ENCODE measurements at regions of chr11 and their contacts with region 1.

Region 1: DNA sequence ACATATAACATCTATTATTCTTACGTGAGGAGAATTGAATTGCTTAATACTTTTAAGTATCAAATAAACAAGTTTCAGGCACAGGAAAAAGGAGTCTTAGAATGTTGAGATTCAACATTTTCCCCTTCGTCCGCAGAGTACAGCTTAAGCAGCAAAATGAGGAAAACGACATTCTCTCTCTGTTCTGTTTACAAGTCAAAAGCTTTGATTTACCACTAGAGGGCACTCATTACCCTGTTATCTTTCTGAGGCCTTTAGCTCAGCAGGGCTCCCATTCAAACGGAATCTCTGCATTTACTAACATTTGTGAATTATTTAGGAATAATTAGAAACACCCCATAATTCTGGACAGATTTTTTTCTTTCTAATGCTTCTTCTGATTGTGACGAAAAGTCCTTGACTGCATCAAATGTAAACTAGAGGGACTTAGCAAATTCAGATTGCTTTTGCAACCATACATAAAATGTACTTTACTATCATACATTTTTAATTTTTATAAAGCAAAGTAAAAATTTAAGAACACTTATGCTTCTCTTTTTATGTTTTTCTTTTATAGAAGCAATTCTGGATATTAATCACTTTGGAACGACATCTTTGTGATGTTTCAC is 75.0 kb downstream of the JRKL start:
- DNase-seq: peak; percentile 11
- ATAC-seq: peak; percentile 96
- H3K4me3 ChIP-seq: no peak overlapping the region
- H3K27ac ChIP-seq: no peak overlapping the region
- H3K4me1 ChIP-seq: no peaks in the 10 kb centered on the region
- H3K27me3 ChIP-seq: peaks cover 0 to 3% of the 10 kb centered on the region in 2 experiments; a peak in 1 of 4 replicates
- CTCF ChIP-seq: peak; percentile 63 to 70 (median 64)
- EP300 ChIP-seq: no peak
- POLR2A ChIP-seq: no peak
- RAD21 ChIP-seq: peak; percentile 81

Region 2: DNA sequence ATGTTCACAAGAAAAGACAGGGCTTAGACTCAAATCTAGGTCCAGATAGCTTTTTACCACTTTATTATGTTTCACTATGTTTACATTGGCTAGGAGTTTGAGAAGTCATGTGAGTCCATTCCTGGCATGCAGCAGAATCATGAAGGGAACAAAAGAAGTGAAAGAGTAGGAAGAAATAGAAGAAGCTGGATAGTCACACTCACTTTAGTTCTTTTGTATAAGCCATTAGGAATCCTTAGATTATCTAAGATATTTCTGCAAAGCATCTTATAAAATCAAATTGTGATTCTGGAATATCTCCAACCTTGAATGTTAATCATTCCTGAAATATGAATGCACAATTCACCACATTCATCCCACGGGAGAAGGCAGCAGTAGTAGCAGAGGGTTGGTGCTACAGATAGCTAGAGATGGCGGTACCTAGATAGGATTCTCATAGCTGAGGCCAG is 153.7 kb before region 1 on chr11:
- CTCF ChIA-PET with region 1: no interaction called
- POLR2A ChIA-PET with region 1: no interaction called
- RAD21 ChIA-PET with region 1: no interaction called
- SMC1A ChIA-PET with region 1: no interaction called
- in situ Hi-C with region 1: no loop called
- intact Hi-C with region 1: no loop called
- DNase-seq: no peak
- ATAC-seq: no peak
- H3K4me3 ChIP-seq: no peak overlapping the region
- H3K27ac ChIP-seq: no peak overlapping the region
- H3K4me1 ChIP-seq: peaks cover 8% of the 10 kb centered on the region
- H3K27me3 ChIP-seq: no peaks in the 10 kb centered on the region
- CTCF ChIP-seq: no peak
- EP300 ChIP-seq: no peak
- POLR2A ChIP-seq: no peak
- RAD21 ChIP-seq: no peak

Region 3: DNA sequence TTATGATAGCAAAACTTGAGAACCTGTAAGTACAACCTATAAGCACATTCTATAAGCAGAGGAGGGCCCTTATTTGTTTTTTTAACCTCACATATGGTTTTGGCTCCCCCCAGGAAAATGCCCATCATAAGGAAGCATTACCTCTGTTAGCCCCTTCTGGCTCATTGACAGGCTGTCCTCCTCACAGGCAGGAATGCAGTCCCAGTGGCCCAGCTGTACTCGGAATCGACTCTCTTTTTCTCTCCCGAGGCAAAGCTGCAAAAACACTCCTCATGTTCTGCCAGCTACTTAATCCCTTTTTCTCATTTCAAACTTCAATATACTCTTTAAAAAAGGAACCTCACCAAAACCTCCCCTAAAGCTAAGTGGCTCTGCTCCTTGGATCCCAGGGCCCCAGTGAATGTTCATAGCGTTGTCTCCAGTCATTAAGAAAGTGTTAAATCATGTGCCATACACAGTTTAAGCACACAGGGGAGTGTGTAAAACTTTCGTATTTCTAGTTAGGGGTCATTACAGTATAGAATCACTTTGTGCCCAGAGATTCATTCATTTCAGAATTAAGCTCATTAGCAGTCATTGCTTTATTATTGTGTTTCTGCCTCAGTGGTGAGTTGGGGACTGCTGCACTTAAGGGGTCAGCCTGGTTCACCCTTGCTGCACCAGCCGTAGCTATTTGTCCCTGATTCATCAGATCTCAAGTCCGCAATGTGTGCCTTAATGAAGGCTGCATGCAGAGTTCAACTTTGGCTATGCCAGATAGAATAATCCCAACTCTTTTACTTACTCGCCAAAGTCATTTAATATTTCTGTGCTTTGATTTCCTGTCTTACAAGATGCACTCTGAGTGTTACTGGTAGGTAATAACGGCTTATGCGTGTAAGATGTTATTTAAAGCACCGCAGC is 17.3 kb before region 1 on chr11:
- CTCF ChIA-PET with region 1: interaction called, 22 read pairs
- POLR2A ChIA-PET with region 1: no interaction called
- RAD21 ChIA-PET with region 1: interaction called, 3 read pairs
- SMC1A ChIA-PET with region 1: interaction called, 6 read pairs
- in situ Hi-C with region 1: no loop called
- intact Hi-C with region 1: no loop called
- DNase-seq: no peak
- ATAC-seq: no peak
- H3K4me3 ChIP-seq: no peak overlapping the region
- H3K27ac ChIP-seq: no peak overlapping the region
- H3K4me1 ChIP-seq: no peaks in the 10 kb centered on the region
- H3K27me3 ChIP-seq: peaks cover 0 to 3% of the 10 kb centered on the region in 2 experiments; a peak in 2 of 4 replicates
- CTCF ChIP-seq: no peak
- EP300 ChIP-seq: no peak
- POLR2A ChIP-seq: no peak
- RAD21 ChIP-seq: no peak

Region 4: GRCh38 chr11:96481771-96482170 is 17.0 kb after region 1 on chr11:
- CTCF ChIA-PET with region 1: interaction called, 35 read pairs
- POLR2A ChIA-PET with region 1: no interaction called
- RAD21 ChIA-PET with region 1: interaction called, 3 read pairs
- SMC1A ChIA-PET with region 1: interaction called, 3 read pairs
- in situ Hi-C with region 1: no loop called
- intact Hi-C with region 1: no loop called
- DNase-seq: no peak
- ATAC-seq: no peak
- H3K4me3 ChIP-seq: no peak overlapping the region
- H3K27ac ChIP-seq: no peak overlapping the region
- H3K4me1 ChIP-seq: no peaks in the 10 kb centered on the region
- H3K27me3 ChIP-seq: no peaks in the 10 kb centered on the region; a peak in 1 of 4 replicates
- CTCF ChIP-seq: no peak
- EP300 ChIP-seq: no peak
- POLR2A ChIP-seq: no peak
- RAD21 ChIP-seq: no peak

Region 5: DNA sequence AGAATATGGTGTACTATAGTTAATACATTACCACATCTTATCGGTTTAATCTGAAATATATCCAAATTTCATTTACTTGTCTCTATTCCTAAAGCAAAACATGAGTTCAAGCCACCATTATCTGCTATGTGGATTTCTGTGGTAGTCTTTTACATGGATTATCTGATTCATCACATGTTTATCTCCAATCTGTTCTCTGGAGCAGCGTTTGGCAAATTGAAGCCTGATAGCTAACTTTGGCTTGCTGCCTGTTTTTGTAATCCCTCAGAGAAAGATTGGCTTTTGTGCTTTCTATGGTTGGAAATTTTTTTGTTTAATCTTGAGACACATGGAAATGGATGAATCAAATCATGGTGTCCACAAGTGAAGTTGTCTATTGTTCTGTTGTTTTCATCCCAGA is 199.3 kb after region 1 on chr11:
- CTCF ChIA-PET with region 1: interaction called, 11 read pairs
- POLR2A ChIA-PET with region 1: no interaction called
- RAD21 ChIA-PET with region 1: no interaction called
- SMC1A ChIA-PET with region 1: interaction called, 3 read pairs
- in situ Hi-C with region 1: no loop called
- intact Hi-C with region 1: no loop called
- DNase-seq: no peak
- ATAC-seq: no peak
- H3K4me3 ChIP-seq: no peak overlapping the region
- H3K27ac ChIP-seq: no peak overlapping the region
- H3K4me1 ChIP-seq: no peaks in the 10 kb centered on the region
- H3K27me3 ChIP-seq: no peaks in the 10 kb centered on the region
- CTCF ChIP-seq: no peak
- EP300 ChIP-seq: no peak
- POLR2A ChIP-seq: no peak
- RAD21 ChIP-seq: no peak

Region 6: GRCh38 chr11:97140885-97141494 is 676.2 kb after region 1 on chr11:
- CTCF ChIA-PET with region 1: interaction called, 75 read pairs
- POLR2A ChIA-PET with region 1: interaction called, 3 read pairs
- RAD21 ChIA-PET with region 1: interaction called, 34 read pairs
- SMC1A ChIA-PET with region 1: interaction called, 37 read pairs
- in situ Hi-C with region 1: loop called (anchors 5 kb)
- intact Hi-C with region 1: loop called (anchors 1 kb)
- DNase-seq: no peak
- ATAC-seq: peak; percentile 77
- H3K4me3 ChIP-seq: no peak overlapping the region
- H3K27ac ChIP-seq: no peak overlapping the region
- H3K4me1 ChIP-seq: no peaks in the 10 kb centered on the region
- H3K27me3 ChIP-seq: no peaks in the 10 kb centered on the region
- CTCF ChIP-seq: peak; percentile 50 to 56 (median 55); a peak in 5 of 6 replicates
- EP300 ChIP-seq: no peak
- POLR2A ChIP-seq: no peak
- RAD21 ChIP-seq: peak; percentile 70